ENCODE measurements at regions of chr20 and their contacts with region 1.

Region 1: DNA sequence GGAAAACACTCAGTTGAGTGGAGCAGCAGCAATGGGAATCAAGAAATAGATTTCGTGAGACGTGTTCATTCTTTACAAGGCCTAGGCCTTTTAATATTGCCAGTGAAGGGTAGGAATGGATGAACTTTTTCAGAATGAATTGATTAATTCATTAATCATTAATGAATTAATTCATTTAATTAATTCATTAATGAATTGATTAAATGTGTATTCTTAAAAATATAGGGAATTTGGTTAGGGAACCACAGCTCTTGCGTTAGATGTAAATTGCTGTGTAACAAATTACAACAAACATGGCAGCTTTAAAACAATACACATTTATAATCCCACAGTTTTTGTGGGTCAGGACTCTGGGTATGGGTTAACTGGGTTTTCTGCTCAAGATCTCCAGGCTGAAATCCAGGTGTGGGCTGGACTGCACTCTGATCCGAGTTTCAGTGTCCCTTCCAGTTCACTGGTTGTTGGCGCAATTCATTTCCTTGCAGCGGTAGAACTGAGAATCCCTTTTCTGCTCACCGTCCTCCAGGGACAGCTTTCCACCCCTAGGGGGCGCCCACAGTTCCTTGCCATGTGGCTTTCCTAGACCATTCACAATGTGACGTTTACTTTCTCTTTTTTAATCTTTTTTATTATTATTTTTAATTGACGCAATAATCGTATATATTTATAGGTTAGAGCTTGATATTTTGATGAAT is 32.8 kb upstream of the BCAS1 start:
- DNase-seq: peak; percentile 69
- CTCF ChIP-seq: peak; percentile 80

Region 2: DNA sequence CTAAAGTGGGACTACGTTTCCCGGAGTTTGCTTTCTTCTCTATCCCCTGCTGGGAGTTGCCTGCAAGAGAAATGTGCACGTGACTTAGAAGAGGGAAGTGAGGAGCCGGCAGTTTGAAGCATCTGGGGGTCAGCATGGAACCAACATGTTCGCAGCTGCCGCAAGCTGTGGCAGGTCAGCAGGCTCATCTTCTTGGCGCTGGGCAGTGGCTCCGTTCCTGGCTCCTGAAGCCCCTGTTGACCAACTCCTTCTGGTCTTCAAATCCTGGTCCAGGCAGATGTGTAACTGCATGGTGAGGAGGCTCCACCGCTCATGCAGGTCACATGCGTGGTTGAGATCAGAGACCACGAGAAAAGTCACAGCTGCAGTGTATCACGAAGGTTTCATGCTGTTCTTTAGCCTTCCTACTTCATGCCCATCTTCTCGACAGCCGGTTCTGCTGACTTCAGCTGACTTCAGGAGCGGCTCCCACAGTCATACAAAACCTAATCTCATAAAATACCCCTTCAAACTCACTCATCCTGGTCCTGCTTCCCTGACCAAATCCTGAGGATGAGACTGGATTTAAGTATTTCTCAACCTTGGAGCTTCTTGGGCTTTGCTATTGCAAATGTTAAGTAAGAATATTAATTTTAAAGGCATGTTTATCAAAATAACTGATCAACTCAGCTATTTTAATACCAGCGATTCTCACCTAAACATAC is 12.1 kb after region 1 on chr20:
- CTCF ChIA-PET with region 1: interaction called, 13 read pairs
- POLR2A ChIA-PET with region 1: no interaction called
- DNase-seq: no peak
- CTCF ChIP-seq: no peak

Region 3: GRCh38 chr20:54179946-54180345 is 76.7 kb after region 1 on chr20:
- CTCF ChIA-PET with region 1: interaction called, 13 read pairs
- POLR2A ChIA-PET with region 1: no interaction called
- DNase-seq: no peak
- CTCF ChIP-seq: no peak

Region 4: GRCh38 chr20:54648411-54649307 is 545.4 kb after region 1 on chr20:
- CTCF ChIA-PET with region 1: interaction called, 19 read pairs
- POLR2A ChIA-PET with region 1: no interaction called
- DNase-seq: no peak
- CTCF ChIP-seq: no peak

Measured in GM10248 (cell line).